OCI-LY7 (cell line): ENCODE measurements at regions of chr4 and their contacts with region 1.

Region 1: DNA sequence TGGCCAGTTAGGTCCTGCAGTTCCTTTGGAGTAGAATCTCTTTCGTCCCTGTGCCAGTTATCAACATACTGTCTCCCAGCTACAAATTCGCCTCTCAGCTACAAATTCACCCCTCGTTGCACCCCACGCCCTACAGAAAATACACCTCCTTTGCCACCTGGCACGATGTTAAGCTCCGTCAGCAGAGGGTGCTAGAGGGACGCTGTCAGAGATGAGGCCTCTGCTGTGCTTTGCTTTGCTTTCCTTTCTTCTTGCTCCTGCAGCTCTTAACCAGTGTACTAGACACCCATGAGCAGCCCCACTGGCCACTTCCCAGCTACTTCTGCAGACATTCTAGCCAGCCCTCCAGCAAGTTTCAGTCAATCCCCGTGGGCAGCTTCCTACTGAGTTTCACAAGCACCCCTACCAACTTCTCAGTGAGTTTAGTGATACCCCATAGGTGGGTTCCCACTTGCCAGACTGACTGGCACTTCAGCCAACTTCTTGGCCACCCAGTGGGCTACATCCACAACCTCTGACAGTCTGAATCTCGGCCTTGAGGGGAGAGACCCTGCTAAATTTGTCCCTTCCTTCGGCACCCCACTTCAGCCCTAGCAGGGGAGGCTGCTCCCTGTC is 21.8 kb downstream of the HAUS3 start:
- DNase-seq: peak; percentile 77
- H3K4me3 ChIP-seq: no peak overlapping the region
- H3K27ac ChIP-seq: no peak overlapping the region
- H3K4me1 ChIP-seq: no peaks in the 10 kb centered on the region
- CTCF ChIP-seq: peak; percentile 91

Region 2: GRCh38 chr4:1731180-1731579 is 488.9 kb before region 1 on chr4:
- CTCF ChIA-PET with region 1: no interaction called
- POLR2A ChIA-PET with region 1: no interaction called
- intact Hi-C with region 1: no loop called
- DNase-seq: no peak
- H3K4me3 ChIP-seq: no peak overlapping the region
- H3K27ac ChIP-seq: no peak overlapping the region
- H3K4me1 ChIP-seq: peaks cover 7% of the 10 kb centered on the region
- CTCF ChIP-seq: no peak

Region 3: DNA sequence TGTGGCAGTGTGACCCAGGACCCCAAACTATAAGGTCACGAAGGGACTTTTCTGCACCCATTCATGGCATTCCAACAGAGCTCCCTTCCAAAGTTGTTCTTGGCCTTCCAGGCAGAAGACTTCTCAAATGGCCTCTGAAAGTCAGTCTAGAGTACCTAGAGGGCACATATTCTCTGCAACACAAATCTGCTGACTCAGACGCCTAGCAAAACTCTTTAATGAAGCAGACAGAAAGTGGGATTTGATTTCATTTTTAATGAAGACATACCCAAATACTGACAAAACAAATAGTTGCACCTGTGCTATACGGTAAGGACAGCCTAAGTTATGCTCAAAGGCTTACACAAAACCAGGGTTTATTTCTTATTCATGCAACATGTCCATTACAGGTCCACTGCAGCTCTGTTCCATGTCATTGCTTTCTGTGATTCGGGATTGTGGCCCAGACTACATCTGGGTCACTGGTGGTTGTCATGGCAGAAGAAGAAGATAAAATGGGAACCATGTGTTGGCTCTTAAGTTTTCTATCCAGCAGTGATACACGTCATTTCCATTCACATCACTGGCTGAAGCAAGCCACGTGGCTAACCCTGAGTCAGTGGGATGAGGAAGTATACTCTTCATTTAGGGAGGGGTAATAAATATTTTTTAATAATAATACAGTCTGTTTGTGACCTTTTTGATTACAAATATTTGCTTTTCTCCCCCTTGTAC is 103.3 kb before region 1 on chr4:
- CTCF ChIA-PET with region 1: no interaction called
- POLR2A ChIA-PET with region 1: no interaction called
- intact Hi-C with region 1: no loop called
- DNase-seq: no peak
- H3K4me3 ChIP-seq: no peak overlapping the region
- H3K27ac ChIP-seq: no peak overlapping the region
- H3K4me1 ChIP-seq: no peaks in the 10 kb centered on the region
- CTCF ChIP-seq: no peak

Region 4: DNA sequence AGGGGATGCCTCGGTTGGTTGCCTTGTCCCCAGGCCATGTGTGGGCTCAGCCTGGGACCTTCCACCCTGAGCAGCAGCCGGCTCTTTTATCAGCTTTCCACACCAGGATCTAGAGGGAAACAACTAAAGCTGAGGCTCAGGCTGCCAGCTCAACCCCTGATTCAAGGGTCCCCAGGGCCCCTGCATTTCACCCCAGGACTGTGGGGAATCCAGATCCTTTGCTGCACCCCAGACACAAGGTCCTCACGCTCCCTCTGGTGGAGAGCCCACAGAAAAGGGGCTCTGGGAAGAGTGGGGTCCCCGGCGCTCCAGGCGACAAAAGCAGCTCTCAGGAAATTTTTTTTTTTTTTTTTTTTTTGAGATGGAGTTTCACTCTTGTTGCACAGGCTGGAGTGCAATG is 134.0 kb after region 1 on chr4:
- CTCF ChIA-PET with region 1: no interaction called
- POLR2A ChIA-PET with region 1: no interaction called
- intact Hi-C with region 1: loop called (anchors 1 kb)
- DNase-seq: peak; percentile 36
- H3K4me3 ChIP-seq: no peak overlapping the region
- H3K27ac ChIP-seq: no peak overlapping the region
- H3K4me1 ChIP-seq: no peaks in the 10 kb centered on the region
- CTCF ChIP-seq: peak; percentile 69

Region 5: GRCh38 chr4:2441393-2442174 is 221.5 kb after region 1 on chr4:
- CTCF ChIA-PET with region 1: no interaction called
- POLR2A ChIA-PET with region 1: no interaction called
- intact Hi-C with region 1: loop called (anchors 1 kb)
- DNase-seq: peak; percentile 90
- H3K4me3 ChIP-seq: no peak overlapping the region
- H3K27ac ChIP-seq: no peak overlapping the region
- H3K4me1 ChIP-seq: peaks cover 8% of the 10 kb centered on the region
- CTCF ChIP-seq: peak; percentile 99

Region 6: DNA sequence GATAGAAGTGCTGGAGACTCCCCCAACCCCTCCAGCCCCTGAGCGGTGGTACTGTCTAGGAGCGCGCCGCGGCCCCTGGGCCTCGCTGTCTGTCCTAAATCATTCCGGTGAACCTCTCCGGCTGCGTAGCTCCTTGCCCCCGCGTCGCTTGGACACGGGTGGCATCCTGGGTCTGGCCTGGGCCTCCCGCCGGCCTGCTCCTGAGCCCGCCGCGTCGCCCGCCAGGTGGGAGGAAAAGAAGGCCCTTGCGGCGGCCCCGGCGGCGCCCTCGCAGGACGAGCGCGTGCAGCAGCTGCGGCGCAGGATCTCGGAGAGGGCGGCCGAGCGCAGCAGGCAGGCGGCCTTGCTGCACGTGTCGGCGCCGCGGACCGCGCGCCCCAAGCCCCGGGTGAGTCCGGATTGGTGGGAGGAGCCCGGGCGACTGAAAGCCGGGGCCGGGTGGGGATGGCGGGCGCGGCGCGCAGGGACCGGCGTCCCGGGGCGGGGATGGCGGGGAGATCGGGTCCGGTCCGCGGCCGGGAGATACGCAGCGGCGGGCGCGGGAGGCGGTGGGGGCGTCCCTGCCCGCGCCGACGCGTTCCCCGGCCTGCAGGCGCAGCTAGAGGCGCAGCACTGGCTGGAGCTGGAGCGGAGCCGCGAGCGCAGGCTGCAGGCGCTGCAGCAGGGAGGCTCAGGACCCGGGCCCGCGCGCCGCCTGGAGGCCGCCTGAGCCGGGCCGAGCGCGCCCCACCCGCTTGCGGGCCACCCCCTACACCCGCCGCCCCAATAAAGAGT is 242.3 kb after region 1 on chr4:
- CTCF ChIA-PET with region 1: no interaction called
- POLR2A ChIA-PET with region 1: no interaction called
- intact Hi-C with region 1: loop called (anchors 1 kb)
- DNase-seq: peak; percentile 84
- H3K4me3 ChIP-seq: peak overlapping the region; percentile 63
- H3K27ac ChIP-seq: no peak overlapping the region
- H3K4me1 ChIP-seq: peaks cover 18% of the 10 kb centered on the region
- CTCF ChIP-seq: peak; percentile 67